PC-9 (cell line): ENCODE measurements at regions of chr11 and their contacts with region 1.

Region 1: GRCh38 chr11:72642884-72643511 is 31.2 kb downstream of the PDE2A start:
- DNase-seq: peak in 1 of 2 experiments; percentile 71
- H3K4me3 ChIP-seq: peak overlapping the region; percentile 74
- H3K27ac ChIP-seq: no peak overlapping the region
- H3K4me1 ChIP-seq: peaks cover 17% of the 10 kb centered on the region
- H3K27me3 ChIP-seq: peaks cover 16% of the 10 kb centered on the region
- CTCF ChIP-seq: peak; percentile 94

Region 2: GRCh38 chr11:72471005-72471898 is 171.7 kb before region 1 on chr11:
- CTCF ChIA-PET with region 1: interaction called, 3 read pairs
- POLR2A ChIA-PET with region 1: interaction called, 4 read pairs
- intact Hi-C with region 1: loop called (anchors 2 kb)
- DNase-seq: peak; percentile 52 to 64
- H3K4me3 ChIP-seq: no peak overlapping the region
- H3K27ac ChIP-seq: no peak overlapping the region
- H3K4me1 ChIP-seq: no peaks in the 10 kb centered on the region
- H3K27me3 ChIP-seq: peaks cover 14% of the 10 kb centered on the region; the same call in 1 of the 2 replicates
- CTCF ChIP-seq: peak; percentile 96

Region 3: GRCh38 chr11:72553706-72554105 is 89.3 kb before region 1 on chr11:
- CTCF ChIA-PET with region 1: no interaction called
- POLR2A ChIA-PET with region 1: no interaction called
- intact Hi-C with region 1: no loop called
- DNase-seq: no peak
- H3K4me3 ChIP-seq: no peak overlapping the region
- H3K27ac ChIP-seq: no peak overlapping the region
- H3K4me1 ChIP-seq: no peaks in the 10 kb centered on the region
- H3K27me3 ChIP-seq: peaks cover 15% of the 10 kb centered on the region
- CTCF ChIP-seq: no peak

Region 4: GRCh38 chr11:72585762-72586311 is 57.2 kb before region 1 on chr11:
- CTCF ChIA-PET with region 1: interaction called, 6 read pairs
- POLR2A ChIA-PET with region 1: no interaction called
- intact Hi-C with region 1: loop called (anchors 1 kb)
- DNase-seq: peak in 1 of 2 experiments; percentile 66
- H3K4me3 ChIP-seq: no peak overlapping the region
- H3K27ac ChIP-seq: no peak overlapping the region
- H3K4me1 ChIP-seq: no peaks in the 10 kb centered on the region
- H3K27me3 ChIP-seq: no peaks in the 10 kb centered on the region
- CTCF ChIP-seq: peak; percentile 97

Region 5: DNA sequence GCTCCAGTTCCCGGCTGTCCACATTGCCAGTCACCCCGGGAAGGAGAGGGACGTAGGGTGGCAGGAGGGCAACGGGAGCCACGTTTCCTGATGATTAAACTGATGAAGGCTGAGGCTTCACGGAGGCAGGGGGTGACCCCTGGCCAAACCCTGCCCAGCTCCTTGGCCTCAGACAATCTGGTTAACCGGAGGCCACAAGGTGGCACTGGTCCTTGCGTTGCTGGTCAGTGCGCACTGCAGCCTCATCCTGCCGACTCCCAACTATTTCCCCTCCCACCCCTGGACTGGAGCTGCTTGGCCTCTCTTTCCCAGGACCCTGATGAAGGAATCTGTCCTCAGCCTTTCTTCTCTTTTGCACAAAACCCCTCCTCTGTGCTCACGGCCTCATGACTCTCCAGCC is 44.1 kb before region 1 on chr11:
- CTCF ChIA-PET with region 1: interaction called, 9 read pairs
- POLR2A ChIA-PET with region 1: no interaction called
- intact Hi-C with region 1: loop called (anchors 1 kb)
- DNase-seq: peak in 1 of 2 experiments; percentile 40
- H3K4me3 ChIP-seq: no peak overlapping the region
- H3K27ac ChIP-seq: no peak overlapping the region
- H3K4me1 ChIP-seq: no peaks in the 10 kb centered on the region; the same call in 1 of the 2 replicates
- H3K27me3 ChIP-seq: no peaks in the 10 kb centered on the region
- CTCF ChIP-seq: peak; percentile 48

Region 6: DNA sequence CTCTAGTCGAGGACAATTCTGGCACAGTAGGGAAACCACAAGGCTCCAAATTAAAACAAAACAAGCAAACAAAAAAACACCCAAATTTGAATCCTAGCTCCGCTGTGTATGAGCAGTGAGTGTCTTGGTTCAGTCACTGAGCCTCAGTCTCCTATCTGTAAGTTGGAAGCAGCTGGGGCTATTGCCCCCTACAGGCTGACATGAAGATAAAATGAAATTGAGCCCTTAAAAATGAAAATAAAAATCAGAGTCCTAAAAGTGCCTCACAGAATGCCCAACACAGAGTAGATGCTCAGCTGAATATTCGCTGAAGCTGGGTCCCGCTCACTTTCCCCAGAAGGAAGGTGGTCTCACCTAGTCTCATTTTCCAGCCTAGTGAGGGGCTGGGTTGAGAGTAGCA is 34.0 kb before region 1 on chr11:
- CTCF ChIA-PET with region 1: no interaction called
- POLR2A ChIA-PET with region 1: no interaction called
- intact Hi-C with region 1: no loop called
- DNase-seq: no peak
- H3K4me3 ChIP-seq: no peak overlapping the region
- H3K27ac ChIP-seq: no peak overlapping the region
- H3K4me1 ChIP-seq: no peaks in the 10 kb centered on the region
- H3K27me3 ChIP-seq: peaks cover 14% of the 10 kb centered on the region; the same call in 1 of the 2 replicates
- CTCF ChIP-seq: peak; percentile 75